CD4-positive, alpha-beta memory T cell (primary cell): ENCODE measurements at regions of chr3 and their contacts with region 1.

Region 1: GRCh38 chr3:153513236-153513635 is 351.2 kb downstream of the RAP2B start:
- DNase-seq: peak in 4 of 5 donors; percentile 12 to 20 (median 12)
- H3K4me3 ChIP-seq: no peak overlapping the region
- H3K4me3 Mint-ChIP-seq: no peak overlapping the region
- H3K27ac ChIP-seq: no peak overlapping the region
- H3K27ac Mint-ChIP-seq: no peak overlapping the region
- H3K4me1 ChIP-seq: no peaks in the 10 kb centered on the region
- H3K4me1 Mint-ChIP-seq: peaks cover 0 to 4% (median 1%) of the 10 kb centered on the region in 4 donors
- H3K27me3 ChIP-seq: no peaks in the 10 kb centered on the region
- H3K27me3 Mint-ChIP-seq: peaks cover 0 to 2% of the 10 kb centered on the region in 2 donors

Region 2: DNA sequence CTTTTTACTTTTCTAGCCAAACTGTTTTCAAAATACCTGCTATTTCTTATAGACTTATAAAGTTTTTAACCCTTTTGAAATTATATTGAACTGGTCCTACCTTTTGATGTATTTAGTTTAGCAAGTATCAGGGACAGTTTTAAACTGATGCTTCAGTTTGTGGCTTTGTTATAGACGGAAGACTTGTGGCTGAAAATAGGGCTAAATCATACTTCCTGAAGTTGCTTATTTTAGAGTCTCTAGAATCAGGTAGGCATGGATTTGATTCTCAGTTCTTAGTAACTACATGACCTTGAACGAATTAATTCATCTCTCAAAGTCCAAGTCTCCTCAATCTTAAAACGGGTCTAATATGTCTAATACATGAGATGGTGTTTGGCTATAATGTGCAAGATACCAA is 28.4 kb before region 1 on chr3:
- CTCF ChIA-PET with region 1: no interaction called
- POLR2A ChIA-PET with region 1: no interaction called
- intact Hi-C with region 1: no loop called
- DNase-seq: no peak
- H3K4me3 ChIP-seq: no peak overlapping the region
- H3K4me3 Mint-ChIP-seq: peak overlapping the region in 2 of 8 donors; percentile 20 to 28
- H3K27ac ChIP-seq: no peak overlapping the region
- H3K27ac Mint-ChIP-seq: peak overlapping the region in 4 of 7 donors; percentile 18 to 78 (median 48)
- H3K4me1 ChIP-seq: peaks cover 9% of the 10 kb centered on the region
- H3K4me1 Mint-ChIP-seq: peaks cover 9 to 15% (median 10%) of the 10 kb centered on the region in 4 donors
- H3K27me3 ChIP-seq: no peaks in the 10 kb centered on the region
- H3K27me3 Mint-ChIP-seq: no peaks in the 10 kb centered on the region

Region 3: DNA sequence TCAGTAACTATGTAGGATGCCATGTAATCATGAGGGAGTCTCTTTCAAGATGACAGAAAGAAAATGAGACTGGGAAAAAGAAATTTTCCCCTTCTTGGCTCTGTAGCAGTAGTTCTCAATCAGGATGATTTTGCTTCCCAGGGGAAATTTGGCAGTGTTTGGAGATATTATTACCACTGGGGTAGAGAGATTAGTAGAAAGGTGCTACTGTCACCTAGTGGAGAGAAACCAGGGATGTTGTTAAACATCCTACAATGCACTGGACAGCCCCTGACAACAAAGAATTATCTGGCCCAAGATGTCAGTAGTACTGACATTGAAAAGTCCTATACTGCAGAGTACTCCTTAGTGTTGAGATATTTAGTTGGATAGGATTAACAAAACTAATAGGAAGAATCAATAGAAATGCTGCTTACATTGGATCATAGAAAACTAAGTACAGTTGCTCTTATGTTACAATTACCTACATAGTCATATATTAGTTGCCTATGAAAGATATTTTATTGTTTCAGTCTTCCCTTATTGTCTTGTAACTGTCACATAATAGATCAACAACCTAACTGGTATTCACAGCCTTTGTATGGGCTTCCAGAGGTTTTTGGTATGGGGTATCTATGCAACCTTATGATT is 82.1 kb after region 1 on chr3:
- CTCF ChIA-PET with region 1: interaction called, 6 read pairs
- POLR2A ChIA-PET with region 1: no interaction called
- intact Hi-C with region 1: loop called (anchors 10 kb)
- DNase-seq: peak in 4 of 5 donors; percentile 13 to 24 (median 16)
- H3K4me3 ChIP-seq: no peak overlapping the region
- H3K4me3 Mint-ChIP-seq: no peak overlapping the region
- H3K27ac ChIP-seq: no peak overlapping the region
- H3K27ac Mint-ChIP-seq: peak overlapping the region in 1 of 7 donors; percentile 34
- H3K4me1 ChIP-seq: no peaks in the 10 kb centered on the region
- H3K4me1 Mint-ChIP-seq: peaks cover 0 to 6% (median 5%) of the 10 kb centered on the region in 4 donors
- H3K27me3 ChIP-seq: no peaks in the 10 kb centered on the region
- H3K27me3 Mint-ChIP-seq: no peaks in the 10 kb centered on the region

Region 4: GRCh38 chr3:153688301-153689120 is 175.3 kb after region 1 on chr3:
- CTCF ChIA-PET with region 1: interaction called, 9 read pairs
- POLR2A ChIA-PET with region 1: no interaction called
- intact Hi-C with region 1: loop called (anchors 1 kb)
- DNase-seq: no peak
- H3K4me3 ChIP-seq: no peak overlapping the region
- H3K4me3 Mint-ChIP-seq: no peak overlapping the region
- H3K27ac ChIP-seq: no peak overlapping the region
- H3K27ac Mint-ChIP-seq: no peak overlapping the region
- H3K4me1 ChIP-seq: no peaks in the 10 kb centered on the region
- H3K4me1 Mint-ChIP-seq: peaks cover 0 to 3% (median 1%) of the 10 kb centered on the region in 4 donors
- H3K27me3 ChIP-seq: no peaks in the 10 kb centered on the region
- H3K27me3 Mint-ChIP-seq: peaks cover 0 to 2% of the 10 kb centered on the region in 2 donors